ENCODE measurements at regions of chr18 and their contacts with region 1.

Region 1: GRCh38 chr18:58412844-58413666 is 215.8 kb downstream of the ALPK2 start:
- DNase-seq: no peak
- ATAC-seq: no peak
- H3K4me3 ChIP-seq: no peak overlapping the region
- H3K4me3 Mint-ChIP-seq: no peak overlapping the region
- H3K27ac ChIP-seq: no peak overlapping the region
- H3K27ac Mint-ChIP-seq: no peak overlapping the region
- H3K4me1 ChIP-seq: no peaks in the 10 kb centered on the region
- H3K4me1 Mint-ChIP-seq: no peaks in the 10 kb centered on the region
- H3K27me3 ChIP-seq: no peaks in the 10 kb centered on the region
- H3K27me3 Mint-ChIP-seq: peaks cover 0 to 14% (median 5%) of the 10 kb centered on the region in 5 donors

Region 2: DNA sequence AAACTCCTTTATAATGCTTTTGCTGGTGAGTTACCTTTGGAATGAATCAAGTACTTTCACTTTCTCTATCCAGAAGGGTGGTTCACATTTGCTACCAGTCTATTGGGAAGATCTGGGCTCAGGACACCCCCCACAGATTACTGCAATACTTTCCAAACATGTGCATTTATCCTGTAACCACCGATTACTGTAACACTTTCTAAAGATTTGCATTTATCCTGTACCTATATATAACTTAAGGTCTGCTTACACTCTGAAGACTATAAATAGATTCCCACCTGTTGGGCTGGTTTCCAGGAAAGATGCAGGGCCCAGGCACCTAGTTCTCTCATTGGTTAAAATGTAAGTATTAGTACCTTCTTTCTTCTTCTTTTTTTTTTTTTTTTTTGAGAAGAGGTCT is 482.0 kb before region 1 on chr18:
- CTCF ChIA-PET with region 1: no interaction called
- POLR2A ChIA-PET with region 1: no interaction called
- intact Hi-C with region 1: no loop called
- DNase-seq: no peak
- ATAC-seq: no peak
- H3K4me3 ChIP-seq: no peak overlapping the region
- H3K4me3 Mint-ChIP-seq: peak overlapping the region in 4 of 10 donors; percentile 9 to 26 (median 17)
- H3K27ac ChIP-seq: no peak overlapping the region
- H3K27ac Mint-ChIP-seq: no peak overlapping the region
- H3K4me1 ChIP-seq: no peaks in the 10 kb centered on the region
- H3K4me1 Mint-ChIP-seq: peaks cover 1 to 9% (median 4%) of the 10 kb centered on the region in 7 donors
- H3K27me3 ChIP-seq: no peaks in the 10 kb centered on the region
- H3K27me3 Mint-ChIP-seq: peaks cover 0 to 3% (median 0%) of the 10 kb centered on the region in 5 donors

Region 3: DNA sequence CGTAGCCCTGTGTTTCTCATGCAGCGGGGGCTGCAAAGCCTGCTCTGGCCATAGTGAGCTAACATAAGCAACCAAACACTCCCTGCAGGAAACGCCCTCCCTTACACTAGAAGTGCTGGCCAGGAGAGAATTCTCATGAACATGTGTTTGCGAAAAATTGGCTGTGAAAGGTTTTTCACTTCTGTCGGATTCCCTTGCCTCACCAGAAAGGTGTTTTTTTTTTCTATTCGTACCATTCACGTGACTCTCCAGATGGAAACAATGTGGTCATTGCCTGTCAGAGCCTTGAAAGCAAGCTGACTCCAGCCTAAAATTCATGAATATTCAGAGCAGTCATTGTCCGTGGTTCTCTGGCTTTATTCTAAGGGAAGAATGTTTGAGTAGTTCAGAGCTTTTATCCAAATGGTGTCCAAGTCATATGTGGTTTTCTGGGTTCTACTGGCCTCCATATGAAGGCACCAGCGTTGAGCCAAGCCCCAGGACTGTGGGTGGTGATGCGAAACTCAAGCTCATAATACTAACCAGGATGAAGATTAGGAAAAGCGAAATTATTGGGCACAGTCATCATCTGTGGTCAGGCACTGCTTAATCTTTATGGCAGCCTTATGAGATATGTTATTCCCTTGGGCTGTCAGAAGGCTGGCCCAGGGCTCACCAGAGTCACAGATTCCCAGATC is 20.6 kb before region 1 on chr18:
- CTCF ChIA-PET with region 1: no interaction called
- POLR2A ChIA-PET with region 1: no interaction called
- intact Hi-C with region 1: loop called in 1 of 2 experiments (anchors 1 kb)
- DNase-seq: no peak
- ATAC-seq: no peak
- H3K4me3 ChIP-seq: no peak overlapping the region
- H3K4me3 Mint-ChIP-seq: no peak overlapping the region
- H3K27ac ChIP-seq: no peak overlapping the region
- H3K27ac Mint-ChIP-seq: no peak overlapping the region
- H3K4me1 ChIP-seq: no peaks in the 10 kb centered on the region
- H3K4me1 Mint-ChIP-seq: peaks cover 0 to 9% (median 6%) of the 10 kb centered on the region in 7 donors
- H3K27me3 ChIP-seq: no peaks in the 10 kb centered on the region
- H3K27me3 Mint-ChIP-seq: no peaks in the 10 kb centered on the region